Heart left ventricle (tissue), 16 donors: ENCODE measurements at regions of chr1 and their contacts with region 1.

Region 1: GRCh38 chr1:229507951-229508822 is at the start of gene NUP133:
- DNase-seq: peak; percentile 99 to 100 (median 99)
- ATAC-seq: peak; percentile 97 to 100 (median 98)
- H3K4me3 ChIP-seq: peak within 1 kb of the TSS; percentile 64 to 99 (median 91)
- H3K27ac ChIP-seq: peak within 1 kb of the TSS; percentile 82 to 98 (median 94)
- H3K4me1 ChIP-seq: peaks cover 0 to 23% (median 16%) of the 10 kb centered on the region in 12 donors
- H3K27me3 ChIP-seq: no peaks in the 10 kb centered on the region
- CTCF ChIP-seq: peak in 1 of 12 donors; percentile 8
- POLR2A ChIP-seq: peak; percentile 44 to 91
- total RNA-seq, gene NUP133: 23.1 to 37.3 (median 31.0) TPM

Region 2: DNA sequence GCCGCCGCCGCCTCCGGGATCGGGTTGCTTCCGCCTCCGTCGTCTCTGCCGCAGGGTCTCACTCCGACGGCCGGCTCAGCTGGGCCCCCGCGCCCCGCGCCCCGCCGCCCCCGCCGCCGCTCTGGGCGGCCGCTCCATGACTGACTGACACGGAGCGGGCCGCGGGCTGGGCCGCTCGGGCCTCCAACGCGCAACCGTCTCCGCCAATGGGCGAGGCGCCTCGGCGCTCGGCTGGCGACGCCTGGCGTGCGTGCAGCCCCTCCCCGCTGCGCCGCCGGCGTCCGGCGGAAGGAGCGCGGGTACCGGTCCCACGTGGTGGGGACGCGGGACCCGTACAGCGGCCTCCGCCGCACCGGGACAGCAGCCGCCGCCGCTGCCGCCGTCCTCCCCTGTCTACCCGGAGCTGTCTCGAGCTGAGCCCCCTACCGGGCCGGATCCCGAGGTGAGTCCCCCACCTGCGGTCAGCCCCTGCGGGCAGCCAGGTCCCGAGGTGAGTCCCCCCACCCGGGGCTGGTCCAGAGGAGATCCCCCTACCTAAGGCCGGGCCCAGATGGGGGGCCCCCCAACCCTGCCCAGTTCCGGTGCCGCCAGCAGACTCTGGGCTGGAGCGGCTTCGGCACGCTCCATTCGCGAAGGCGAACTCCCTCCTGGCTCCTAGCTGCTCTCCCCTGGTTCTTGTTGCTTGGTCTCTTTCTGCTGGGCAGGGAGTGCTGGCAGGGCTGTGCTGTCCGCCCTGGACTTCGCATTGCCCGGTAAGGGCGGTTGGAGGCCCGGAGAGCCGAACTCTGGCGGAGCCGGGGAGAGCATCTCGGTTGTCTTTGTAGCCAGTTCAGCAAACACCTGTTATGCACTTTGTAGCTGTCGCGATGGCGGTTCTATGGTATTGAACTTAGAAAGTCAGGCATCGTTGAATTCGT is 118.0 kb after region 1 on chr1 and contains the starts of genes TAF5L and URB2:
- intact Hi-C with region 1: loop called in 1 of 10 experiments (anchors 2 kb)
- DNase-seq: peak; percentile 89 to 94 (median 93)
- ATAC-seq: peak; percentile 91 to 98 (median 98)
- H3K4me3 ChIP-seq: peak within 1 kb of the TSS; percentile 80 to 98 (median 95)
- H3K27ac ChIP-seq: peak within 1 kb of the TSS; percentile 80 to 97 (median 88)
- H3K4me1 ChIP-seq: peaks cover 2 to 50% (median 37%) of the 10 kb centered on the region in 12 donors
- H3K27me3 ChIP-seq: no peaks in the 10 kb centered on the region
- CTCF ChIP-seq: peak in 2 of 12 donors; percentile 13 to 27
- POLR2A ChIP-seq: peak in 1 of 2 donors; percentile 74
- total RNA-seq, gene TAF5L: 7.1 to 15.4 (median 11.1) TPM
- total RNA-seq, gene URB2: 2.6 to 6.7 (median 5.0) TPM